ENCODE measurements at regions of chr20 and their contacts with region 1.

Region 1: GRCh38 chr20:54643791-54644190 is 168.4 kb downstream of the DOK5 start:
- DNase-seq: no peak
- H3K4me3 ChIP-seq: no peak overlapping the region
- H3K27ac ChIP-seq: no peak overlapping the region
- H3K4me1 ChIP-seq: no peaks in the 10 kb centered on the region
- H3K27me3 ChIP-seq: no peaks in the 10 kb centered on the region
- CTCF ChIP-seq: no peak
- POLR2A ChIP-seq: no peak

Region 2: GRCh38 chr20:54093423-54094267 is 550.1 kb before region 1 on chr20:
- CTCF ChIA-PET with region 1: interaction called, 18 read pairs
- POLR2A ChIA-PET with region 1: no interaction called
- dilution Hi-C with region 1: no loop called
- intact Hi-C with region 1: loop called (anchors 1 kb)
- DNase-seq: no peak
- H3K4me3 ChIP-seq: no peak overlapping the region
- H3K27ac ChIP-seq: no peak overlapping the region
- H3K4me1 ChIP-seq: no peaks in the 10 kb centered on the region
- H3K27me3 ChIP-seq: no peaks in the 10 kb centered on the region
- CTCF ChIP-seq: no peak
- POLR2A ChIP-seq: no peak

Region 3: DNA sequence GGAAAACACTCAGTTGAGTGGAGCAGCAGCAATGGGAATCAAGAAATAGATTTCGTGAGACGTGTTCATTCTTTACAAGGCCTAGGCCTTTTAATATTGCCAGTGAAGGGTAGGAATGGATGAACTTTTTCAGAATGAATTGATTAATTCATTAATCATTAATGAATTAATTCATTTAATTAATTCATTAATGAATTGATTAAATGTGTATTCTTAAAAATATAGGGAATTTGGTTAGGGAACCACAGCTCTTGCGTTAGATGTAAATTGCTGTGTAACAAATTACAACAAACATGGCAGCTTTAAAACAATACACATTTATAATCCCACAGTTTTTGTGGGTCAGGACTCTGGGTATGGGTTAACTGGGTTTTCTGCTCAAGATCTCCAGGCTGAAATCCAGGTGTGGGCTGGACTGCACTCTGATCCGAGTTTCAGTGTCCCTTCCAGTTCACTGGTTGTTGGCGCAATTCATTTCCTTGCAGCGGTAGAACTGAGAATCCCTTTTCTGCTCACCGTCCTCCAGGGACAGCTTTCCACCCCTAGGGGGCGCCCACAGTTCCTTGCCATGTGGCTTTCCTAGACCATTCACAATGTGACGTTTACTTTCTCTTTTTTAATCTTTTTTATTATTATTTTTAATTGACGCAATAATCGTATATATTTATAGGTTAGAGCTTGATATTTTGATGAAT is 540.6 kb before region 1 on chr20:
- CTCF ChIA-PET with region 1: interaction called, 7 read pairs
- POLR2A ChIA-PET with region 1: no interaction called
- dilution Hi-C with region 1: no loop called
- intact Hi-C with region 1: loop called (anchors 1 kb)
- DNase-seq: peak; percentile 49
- H3K4me3 ChIP-seq: no peak overlapping the region
- H3K27ac ChIP-seq: no peak overlapping the region
- H3K4me1 ChIP-seq: no peaks in the 10 kb centered on the region
- H3K27me3 ChIP-seq: peaks cover 0 to 3% of the 10 kb centered on the region in 2 experiments
- CTCF ChIP-seq: peak; percentile 88 to 90
- POLR2A ChIP-seq: no peak

Region 4: GRCh38 chr20:54219751-54220426 is 423.9 kb before region 1 on chr20:
- CTCF ChIA-PET with region 1: interaction called, 38 read pairs
- POLR2A ChIA-PET with region 1: no interaction called
- dilution Hi-C with region 1: no loop called
- intact Hi-C with region 1: loop called (anchors 1 kb)
- DNase-seq: peak; percentile 56
- H3K4me3 ChIP-seq: no peak overlapping the region
- H3K27ac ChIP-seq: no peak overlapping the region
- H3K4me1 ChIP-seq: peaks cover 11% of the 10 kb centered on the region
- H3K27me3 ChIP-seq: no peaks in the 10 kb centered on the region
- CTCF ChIP-seq: peak; percentile 30 to 33
- POLR2A ChIP-seq: no peak

Region 5: GRCh38 chr20:54533081-54533480 is 110.7 kb before region 1 on chr20:
- CTCF ChIA-PET with region 1: interaction called, 17 read pairs
- POLR2A ChIA-PET with region 1: no interaction called
- dilution Hi-C with region 1: no loop called
- intact Hi-C with region 1: loop called (anchors 2 kb)
- DNase-seq: no peak
- H3K4me3 ChIP-seq: no peak overlapping the region
- H3K27ac ChIP-seq: no peak overlapping the region
- H3K4me1 ChIP-seq: no peaks in the 10 kb centered on the region
- H3K27me3 ChIP-seq: no peaks in the 10 kb centered on the region
- CTCF ChIP-seq: no peak
- POLR2A ChIP-seq: no peak

Measured in endothelial cell of umbilical vein (primary cell).